ENCODE measurements at regions of chr2 and their contacts with region 1.

Region 1: DNA sequence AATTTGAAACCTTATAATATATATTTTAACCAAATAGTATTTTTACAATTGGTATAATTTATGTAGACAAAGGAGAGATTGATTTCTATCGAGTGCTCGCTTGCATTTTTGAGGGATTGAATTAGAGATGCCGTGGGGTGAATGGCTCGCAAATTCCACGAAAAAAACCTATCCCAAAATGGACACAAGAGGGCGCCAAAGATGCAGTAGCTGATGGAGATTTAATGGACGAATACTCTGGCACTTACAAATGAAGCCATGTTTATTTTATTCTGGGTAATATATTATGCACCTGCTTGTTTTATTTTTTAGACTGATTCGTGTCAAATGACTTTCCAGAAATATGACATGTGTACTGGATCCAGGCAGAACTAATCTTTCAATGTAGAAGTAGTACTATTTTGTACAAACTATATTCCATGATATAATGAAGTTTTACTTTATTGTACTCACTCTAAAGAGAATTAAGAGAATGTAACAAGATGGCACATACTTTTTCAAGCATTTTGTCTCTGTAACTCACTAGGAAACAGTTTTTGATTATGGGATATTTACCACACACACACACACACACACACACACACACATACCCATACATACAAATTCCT is 505.4 kb downstream of the PLCL1 start:
- DNase-seq: peak in 1 of 2 donors; percentile 22
- ATAC-seq: no peak
- H3K4me3 ChIP-seq: no peak overlapping the region
- H3K27ac ChIP-seq: no peak overlapping the region
- H3K4me1 ChIP-seq: no peaks in the 10 kb centered on the region
- H3K27me3 ChIP-seq: peaks cover 0 to 41% (median 22%) of the 10 kb centered on the region in 7 donors
- CTCF ChIP-seq: peak; percentile 53 to 89 (median 84)

Region 2: GRCh38 chr2:198546122-198546521 is 236.3 kb after region 1 on chr2:
- intact Hi-C with region 1: no loop called
- DNase-seq: no peak
- ATAC-seq: no peak
- H3K4me3 ChIP-seq: no peak overlapping the region
- H3K27ac ChIP-seq: no peak overlapping the region
- H3K4me1 ChIP-seq: no peaks in the 10 kb centered on the region
- H3K27me3 ChIP-seq: no peaks in the 10 kb centered on the region
- CTCF ChIP-seq: no peak

Region 3: DNA sequence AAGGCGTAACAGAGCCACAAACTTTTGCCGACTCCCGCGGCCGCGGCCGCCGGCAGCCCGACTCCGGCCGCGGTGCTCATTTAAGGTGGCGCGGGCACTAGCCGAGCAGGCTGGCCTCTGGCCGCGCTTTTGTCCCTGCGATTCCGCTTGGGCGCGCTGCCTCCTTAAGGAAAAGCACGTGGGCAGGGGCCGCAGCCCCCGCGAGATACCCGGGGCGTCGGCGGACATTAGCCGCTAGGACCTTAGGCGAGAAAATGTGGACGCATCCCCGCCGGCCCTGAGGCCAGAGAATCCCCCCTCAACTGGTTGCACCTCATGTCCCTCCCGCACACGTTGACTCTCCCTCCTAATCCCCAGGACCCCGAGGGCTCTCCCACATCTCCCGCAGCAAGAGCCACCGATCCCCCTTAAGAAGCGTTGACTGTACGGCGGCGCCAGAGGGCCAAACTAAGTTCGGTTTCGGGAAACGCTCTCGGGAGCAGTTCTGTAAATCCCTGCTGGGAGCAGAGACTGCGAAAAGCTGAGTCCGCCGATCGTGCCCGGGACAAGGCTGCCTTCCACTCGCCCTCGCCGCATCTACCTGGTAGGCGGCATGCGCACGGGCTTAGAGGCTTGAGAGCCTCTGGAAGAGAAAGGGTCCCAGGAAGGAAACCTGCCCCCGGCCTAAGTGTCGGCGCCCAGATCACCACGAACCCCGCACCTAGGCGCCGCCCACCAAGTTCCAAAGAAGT is 1149.7 kb after region 1 on chr2:
- intact Hi-C with region 1: loop called in 2 of 10 experiments (anchors 10 kb)
- DNase-seq: peak; percentile 94 to 96
- ATAC-seq: peak; percentile 75 to 95 (median 90)
- H3K4me3 ChIP-seq: peak overlapping the region; percentile 61 to 99 (median 86)
- H3K27ac ChIP-seq: peak overlapping the region in 9 of 10 donors; percentile 5 to 78 (median 64)
- H3K4me1 ChIP-seq: peaks cover 22 to 70% (median 52%) of the 10 kb centered on the region in 9 donors
- H3K27me3 ChIP-seq: peaks cover 26 to 91% (median 81%) of the 10 kb centered on the region in 7 donors
- CTCF ChIP-seq: peak in 2 of 9 donors; percentile 1 to 13

Region 4: DNA sequence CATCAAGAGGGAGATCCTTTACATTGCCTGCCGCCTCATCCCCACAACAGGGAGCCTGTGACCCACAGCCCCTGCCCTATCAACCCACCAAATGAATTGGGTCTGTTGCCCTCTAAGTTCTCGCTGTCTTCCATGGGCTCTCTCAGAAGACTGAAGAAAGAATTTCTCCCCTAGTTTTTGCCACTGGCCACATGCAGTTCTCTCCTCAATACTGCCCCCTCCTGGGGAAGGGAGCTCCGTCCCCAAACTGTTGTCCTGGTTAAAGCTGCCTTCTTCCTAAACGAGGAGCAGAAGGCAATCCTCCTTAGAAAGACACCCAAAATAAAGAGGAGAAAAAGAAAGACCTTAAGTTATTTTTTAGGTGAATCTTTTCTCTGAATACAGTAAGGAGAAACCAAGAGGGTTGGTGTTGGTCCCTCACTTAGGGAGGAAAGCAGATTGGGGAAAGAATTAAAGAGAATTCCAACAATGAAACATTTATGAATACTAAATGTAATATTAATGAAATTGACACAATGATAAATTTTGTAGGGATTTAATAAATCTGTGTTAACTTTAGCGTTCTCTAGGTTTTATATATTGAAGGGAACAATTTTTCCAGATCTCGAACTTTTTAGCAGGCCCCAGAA is 1179.1 kb after region 1 on chr2:
- intact Hi-C with region 1: loop called in 7 of 10 experiments (anchors 5 to 10 kb)
- DNase-seq: peak in 1 of 2 donors; percentile 29
- ATAC-seq: no peak
- H3K4me3 ChIP-seq: no peak overlapping the region
- H3K27ac ChIP-seq: no peak overlapping the region
- H3K4me1 ChIP-seq: no peaks in the 10 kb centered on the region
- H3K27me3 ChIP-seq: peaks cover 0 to 56% (median 8%) of the 10 kb centered on the region in 7 donors
- CTCF ChIP-seq: peak; percentile 23 to 75 (median 62)

Region 5: GRCh38 chr2:199739413-199740110 is 1429.8 kb after region 1 on chr2:
- intact Hi-C with region 1: loop called in 9 of 10 experiments (anchors 2 to 10 kb)
- DNase-seq: peak; percentile 50 to 63
- ATAC-seq: peak in 3 of 8 donors; percentile 37 to 57 (median 47)
- H3K4me3 ChIP-seq: no peak overlapping the region
- H3K27ac ChIP-seq: peak overlapping the region in 1 of 10 donors; percentile 10
- H3K4me1 ChIP-seq: peaks cover 0 to 13% (median 0%) of the 10 kb centered on the region in 9 donors
- H3K27me3 ChIP-seq: peaks cover 0 to 58% (median 9%) of the 10 kb centered on the region in 7 donors
- CTCF ChIP-seq: peak; percentile 84 to 95 (median 89)

Measured in heart right ventricle (tissue), 16 donors.